T-cell (primary cell): ENCODE measurements at regions of chr1 and their contacts with region 1.

Region 1: GRCh38 chr1:220733090-220733601 is 15.0 kb upstream of the MTARC2 start:
- DNase-seq: peak; percentile 41 to 81 (median 68)
- ATAC-seq: peak; percentile 82 to 90 (median 86)
- H3K4me3 ChIP-seq: no peak overlapping the region
- H3K4me3 Mint-ChIP-seq: peak overlapping the region in 2 of 3 donors; percentile 43 to 47
- H3K27ac ChIP-seq: no peak overlapping the region
- H3K27ac Mint-ChIP-seq: no peak overlapping the region
- H3K4me1 ChIP-seq: peaks cover 3 to 11% of the 10 kb centered on the region in 2 experiments
- H3K4me1 Mint-ChIP-seq: peaks cover 0 to 19% (median 16%) of the 10 kb centered on the region in 3 donors
- H3K27me3 ChIP-seq: no peaks in the 10 kb centered on the region
- H3K27me3 Mint-ChIP-seq: no peaks in the 10 kb centered on the region

Region 2: GRCh38 chr1:220189750-220190347 is 543.3 kb before region 1 on chr1:
- CTCF ChIA-PET with region 1: interaction called, 5 to 11 read pairs
- POLR2A ChIA-PET with region 1: no interaction called
- DNase-seq: peak in 1 of 35 experiments; percentile 26
- ATAC-seq: no peak
- H3K4me3 ChIP-seq: no peak overlapping the region
- H3K4me3 Mint-ChIP-seq: no peak overlapping the region
- H3K27ac ChIP-seq: no peak overlapping the region
- H3K27ac Mint-ChIP-seq: no peak overlapping the region
- H3K4me1 ChIP-seq: no peaks in the 10 kb centered on the region
- H3K4me1 Mint-ChIP-seq: no peaks in the 10 kb centered on the region
- H3K27me3 ChIP-seq: no peaks in the 10 kb centered on the region
- H3K27me3 Mint-ChIP-seq: no peaks in the 10 kb centered on the region

Region 3: DNA sequence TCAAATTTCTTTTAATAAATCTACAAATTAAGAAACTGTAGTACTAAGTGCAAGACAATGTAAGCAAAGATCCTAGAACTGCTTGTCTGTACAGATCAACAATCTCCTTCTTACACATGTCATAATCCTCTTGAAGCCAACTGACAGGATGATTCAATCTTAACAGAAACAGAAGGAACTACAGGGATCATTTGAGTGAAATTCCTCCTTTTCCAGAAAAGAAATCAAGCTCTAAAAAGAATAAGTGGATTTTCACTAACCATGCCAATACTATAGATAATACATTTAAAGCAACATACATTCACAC is 514.1 kb before region 1 on chr1:
- CTCF ChIA-PET with region 1: interaction called, 5 to 11 read pairs
- POLR2A ChIA-PET with region 1: no interaction called
- DNase-seq: no peak
- ATAC-seq: no peak
- H3K4me3 ChIP-seq: no peak overlapping the region
- H3K4me3 Mint-ChIP-seq: no peak overlapping the region
- H3K27ac ChIP-seq: no peak overlapping the region
- H3K27ac Mint-ChIP-seq: no peak overlapping the region
- H3K4me1 ChIP-seq: no peaks in the 10 kb centered on the region
- H3K4me1 Mint-ChIP-seq: peaks cover 38 to 57% (median 44%) of the 10 kb centered on the region in 3 donors
- H3K27me3 ChIP-seq: no peaks in the 10 kb centered on the region
- H3K27me3 Mint-ChIP-seq: no peaks in the 10 kb centered on the region

Region 4: GRCh38 chr1:220281159-220281574 is 452.0 kb before region 1 on chr1:
- CTCF ChIA-PET with region 1: interaction called, 3 to 10 read pairs
- POLR2A ChIA-PET with region 1: no interaction called
- DNase-seq: no peak
- ATAC-seq: no peak
- H3K4me3 ChIP-seq: no peak overlapping the region
- H3K4me3 Mint-ChIP-seq: no peak overlapping the region
- H3K27ac ChIP-seq: no peak overlapping the region
- H3K27ac Mint-ChIP-seq: no peak overlapping the region
- H3K4me1 ChIP-seq: no peaks in the 10 kb centered on the region
- H3K4me1 Mint-ChIP-seq: no peaks in the 10 kb centered on the region
- H3K27me3 ChIP-seq: no peaks in the 10 kb centered on the region
- H3K27me3 Mint-ChIP-seq: peaks cover 3 to 8% of the 10 kb centered on the region in 2 donors

Region 5: DNA sequence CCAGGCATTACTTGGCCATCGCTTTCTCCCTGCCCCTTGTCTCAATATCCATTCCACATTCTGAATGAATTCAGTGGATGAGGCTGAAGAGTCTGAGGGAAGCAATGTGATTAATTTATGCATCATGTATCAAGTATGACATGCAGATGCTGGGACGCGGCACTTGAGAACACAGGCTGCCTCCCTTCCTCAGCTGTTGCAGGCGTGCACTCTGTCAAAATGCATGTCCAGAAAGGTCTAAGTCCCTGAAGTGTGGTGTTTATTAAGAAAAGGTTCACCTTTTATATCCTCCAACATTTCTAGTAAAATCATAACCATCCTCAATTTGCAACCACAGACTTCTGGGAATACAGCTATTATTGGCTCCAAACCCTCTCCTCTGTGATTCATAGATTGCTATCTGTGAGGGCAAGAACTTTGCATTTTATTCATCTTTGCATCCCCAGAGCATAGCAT is 438.3 kb before region 1 on chr1:
- CTCF ChIA-PET with region 1: interaction called in 1 of 2 experiments, 14 read pairs
- POLR2A ChIA-PET with region 1: interaction called in 1 of 2 experiments, 3 read pairs
- DNase-seq: no peak
- ATAC-seq: no peak
- H3K4me3 ChIP-seq: no peak overlapping the region
- H3K4me3 Mint-ChIP-seq: no peak overlapping the region
- H3K27ac ChIP-seq: no peak overlapping the region
- H3K27ac Mint-ChIP-seq: no peak overlapping the region
- H3K4me1 ChIP-seq: no peaks in the 10 kb centered on the region
- H3K4me1 Mint-ChIP-seq: no peaks in the 10 kb centered on the region
- H3K27me3 ChIP-seq: peaks cover 0 to 9% of the 10 kb centered on the region in 2 experiments
- H3K27me3 Mint-ChIP-seq: peaks cover 27 to 31% of the 10 kb centered on the region in 2 donors

Region 6: DNA sequence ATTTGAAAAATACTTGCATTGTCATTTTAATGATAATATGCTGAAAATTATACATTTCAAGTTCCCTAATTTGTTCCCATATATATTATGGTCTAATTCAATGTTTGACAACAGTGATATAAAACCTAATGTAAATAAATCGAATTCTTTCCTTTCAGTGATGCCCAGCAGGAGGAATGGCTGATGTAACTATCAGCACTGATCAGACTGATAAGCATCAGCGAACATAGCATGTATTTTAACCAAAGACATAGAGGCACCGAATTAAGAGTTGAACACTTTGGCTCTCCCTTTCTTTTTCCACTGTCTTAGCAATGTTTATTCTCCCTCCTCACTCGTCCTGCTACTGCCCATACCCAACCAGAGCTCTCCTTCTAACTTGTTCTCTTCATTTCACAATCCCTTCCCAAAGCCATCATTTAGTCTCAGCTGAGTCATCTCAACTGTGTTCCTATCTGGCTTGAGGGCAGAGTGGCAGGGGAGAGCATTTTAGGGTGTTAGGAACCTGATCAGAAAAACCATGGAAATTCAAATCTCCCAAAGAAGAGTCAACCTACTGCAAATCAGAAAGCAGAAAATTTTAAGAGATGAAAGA is 101.8 kb before region 1 on chr1:
- CTCF ChIA-PET with region 1: no interaction called
- POLR2A ChIA-PET with region 1: no interaction called
- DNase-seq: no peak
- ATAC-seq: no peak
- H3K4me3 ChIP-seq: no peak overlapping the region
- H3K4me3 Mint-ChIP-seq: no peak overlapping the region
- H3K27ac ChIP-seq: no peak overlapping the region
- H3K27ac Mint-ChIP-seq: no peak overlapping the region
- H3K4me1 ChIP-seq: no peaks in the 10 kb centered on the region
- H3K4me1 Mint-ChIP-seq: no peaks in the 10 kb centered on the region
- H3K27me3 ChIP-seq: no peaks in the 10 kb centered on the region
- H3K27me3 Mint-ChIP-seq: peaks cover 5 to 13% of the 10 kb centered on the region in 2 donors

Region 7: DNA sequence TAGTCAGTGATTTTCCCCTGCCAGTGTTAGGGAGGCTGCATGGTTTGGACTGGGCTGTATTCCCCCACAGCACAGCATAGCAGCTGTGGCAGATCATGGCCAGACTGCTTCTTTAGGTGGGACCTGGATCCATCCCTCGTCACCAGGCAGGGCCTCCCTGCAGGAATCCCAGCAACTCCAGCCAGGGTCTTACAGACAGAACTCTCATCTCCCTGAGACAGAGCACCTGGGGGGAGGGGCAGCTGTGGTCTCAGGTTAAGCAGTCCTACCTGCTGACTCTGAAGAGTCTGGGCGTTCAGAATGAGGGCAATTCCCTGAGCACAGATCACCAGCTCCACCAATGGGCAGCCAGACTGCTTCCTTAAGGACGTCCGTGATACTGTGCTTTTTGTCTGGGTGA is 90.9 kb before region 1 on chr1:
- CTCF ChIA-PET with region 1: no interaction called
- POLR2A ChIA-PET with region 1: no interaction called
- DNase-seq: no peak
- ATAC-seq: no peak
- H3K4me3 ChIP-seq: no peak overlapping the region
- H3K4me3 Mint-ChIP-seq: no peak overlapping the region
- H3K27ac ChIP-seq: no peak overlapping the region
- H3K27ac Mint-ChIP-seq: no peak overlapping the region
- H3K4me1 ChIP-seq: no peaks in the 10 kb centered on the region
- H3K4me1 Mint-ChIP-seq: no peaks in the 10 kb centered on the region
- H3K27me3 ChIP-seq: peaks cover 0 to 11% of the 10 kb centered on the region in 2 experiments
- H3K27me3 Mint-ChIP-seq: peaks cover 3 to 16% of the 10 kb centered on the region in 2 donors

Region 8: DNA sequence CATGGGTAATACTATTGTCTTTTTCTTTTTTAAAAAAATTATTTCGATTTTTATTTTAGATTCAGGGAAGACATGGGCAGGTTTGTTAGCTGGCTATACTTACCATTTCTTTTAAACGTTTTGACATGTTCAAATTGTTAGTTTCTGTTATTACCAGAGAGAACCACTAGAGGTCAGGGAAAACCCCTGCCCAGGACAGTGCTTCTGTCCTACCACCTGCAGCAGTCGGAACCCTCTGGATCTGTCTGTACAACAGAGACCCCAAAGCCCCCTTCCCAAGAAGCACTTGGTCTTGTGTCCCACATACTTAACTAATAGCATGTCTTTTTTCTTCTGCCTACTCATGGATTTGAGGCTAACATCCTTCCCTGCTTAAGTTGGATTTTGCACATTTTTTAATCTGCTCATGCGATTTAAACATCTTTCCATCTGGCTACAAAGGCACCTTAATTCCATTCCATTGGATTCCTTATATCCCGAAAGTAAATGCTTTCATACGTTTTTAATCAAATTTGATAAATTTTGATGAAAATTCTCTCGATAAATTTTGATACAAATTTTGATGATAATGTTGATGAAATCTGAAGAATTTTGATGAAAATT is 53.0 kb before region 1 on chr1:
- CTCF ChIA-PET with region 1: interaction called, 5 to 24 read pairs
- POLR2A ChIA-PET with region 1: no interaction called
- DNase-seq: peak in 2 of 35 experiments; percentile 12 to 48
- ATAC-seq: peak; percentile 35 to 63 (median 56)
- H3K4me3 ChIP-seq: no peak overlapping the region
- H3K4me3 Mint-ChIP-seq: no peak overlapping the region
- H3K27ac ChIP-seq: no peak overlapping the region
- H3K27ac Mint-ChIP-seq: no peak overlapping the region
- H3K4me1 ChIP-seq: peaks cover 0 to 2% of the 10 kb centered on the region in 2 experiments
- H3K4me1 Mint-ChIP-seq: no peaks in the 10 kb centered on the region
- H3K27me3 ChIP-seq: peaks cover 0 to 5% of the 10 kb centered on the region in 2 experiments
- H3K27me3 Mint-ChIP-seq: no peaks in the 10 kb centered on the region